ENCODE measurements at regions of chr11 and their contacts with region 1.

Region 1: GRCh38 chr11:61384271-61385242 is 7.8 kb upstream of the TMEM216 start:
- DNase-seq: no peak
- H3K4me3 ChIP-seq: no peak overlapping the region
- H3K27ac ChIP-seq: no peak overlapping the region
- H3K4me1 ChIP-seq: no peaks in the 10 kb centered on the region
- H3K27me3 ChIP-seq: no peaks in the 10 kb centered on the region
- CTCF ChIP-seq: no peak
- POLR2A ChIP-seq: no peak

Region 2: DNA sequence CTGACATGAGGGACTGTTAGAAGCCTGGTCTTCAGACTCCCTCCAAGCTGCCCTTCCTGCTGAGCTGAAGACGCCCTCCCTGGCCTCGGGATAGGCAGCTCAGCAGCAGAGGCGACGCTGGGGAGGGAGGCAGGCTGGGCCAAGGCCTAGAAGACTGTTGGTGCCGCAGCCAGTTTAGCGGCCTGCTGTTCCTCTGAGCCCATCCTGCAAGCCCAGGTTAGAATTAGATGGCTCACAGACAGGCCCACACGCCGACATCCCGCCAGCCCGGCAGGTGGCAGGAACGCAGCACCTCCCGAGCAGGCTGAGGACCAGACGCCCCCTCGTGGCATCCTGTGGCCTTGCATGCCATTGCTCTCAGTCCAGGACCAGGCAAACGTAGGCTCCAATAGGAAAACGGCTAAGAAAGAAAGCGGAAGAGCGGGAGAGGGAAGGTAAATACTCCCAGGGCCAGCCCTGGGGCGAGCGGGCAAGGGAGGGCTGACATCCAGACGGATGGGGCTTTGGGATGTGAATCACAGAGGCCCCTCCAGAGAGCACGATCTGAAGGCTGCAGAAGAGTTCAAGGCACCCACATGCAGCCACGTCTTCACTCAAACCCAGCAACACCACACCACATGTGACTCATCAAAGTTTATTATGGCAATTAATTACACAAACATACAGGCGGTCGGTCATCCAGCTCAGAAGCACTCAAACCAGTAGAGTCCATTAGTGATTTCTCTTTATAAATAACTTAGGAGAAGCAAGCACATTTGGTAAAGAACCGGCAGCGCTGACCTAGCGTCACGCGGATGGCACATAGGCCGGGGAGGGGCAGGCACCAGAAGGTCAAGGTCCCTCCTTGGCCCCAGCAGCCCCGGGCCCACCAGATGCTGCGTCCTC is 254.7 kb before region 1 on chr11:
- intact Hi-C with region 1: no loop called
- DNase-seq: peak; percentile 90
- H3K4me3 ChIP-seq: peak overlapping the region; percentile 8 to 23
- H3K27ac ChIP-seq: peak overlapping the region; percentile 85 to 90
- H3K4me1 ChIP-seq: peaks cover 0 to 6% of the 10 kb centered on the region in 2 donors
- H3K27me3 ChIP-seq: no peaks in the 10 kb centered on the region
- CTCF ChIP-seq: peak; percentile 99 to 100 (median 100)
- POLR2A ChIP-seq: peak in 1 of 2 donors; percentile 23

Region 3: DNA sequence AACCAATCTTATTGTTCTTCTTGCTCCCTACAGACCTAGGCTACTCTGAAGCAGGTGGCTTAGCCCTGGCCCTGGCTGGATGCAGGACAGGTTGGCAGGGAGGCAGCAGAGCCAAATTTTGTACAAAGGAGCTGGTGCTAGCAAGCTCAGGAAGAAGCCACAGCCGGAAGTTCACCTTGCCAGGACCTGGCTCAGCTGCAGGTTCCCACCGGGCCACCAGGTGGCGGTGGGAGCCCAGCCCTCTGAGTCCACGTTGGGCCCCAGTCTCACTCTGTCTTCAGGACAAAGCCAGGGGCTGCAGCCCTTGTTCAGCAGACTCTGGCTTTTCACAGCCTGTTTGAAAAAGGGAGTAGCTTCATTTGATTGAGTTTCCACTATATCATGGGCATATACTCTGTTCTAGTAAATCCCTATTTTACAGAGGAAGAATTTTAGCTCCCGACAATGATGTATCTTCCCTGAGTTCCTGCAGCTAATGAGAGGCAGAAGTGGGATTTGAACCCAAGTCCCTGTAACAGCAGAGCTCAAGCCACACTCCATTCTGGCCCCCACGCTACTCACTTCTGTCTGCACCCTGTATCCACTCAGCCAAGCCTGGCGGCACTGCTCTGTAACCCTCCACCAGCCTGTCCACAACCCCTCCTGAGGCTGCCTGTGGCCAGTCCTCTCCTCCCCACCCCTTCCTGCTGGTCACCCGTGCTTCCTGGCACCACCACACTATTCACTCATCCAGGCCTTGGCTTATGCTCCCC is 48.2 kb before region 1 on chr11:
- intact Hi-C with region 1: loop called (anchors 2 kb)
- DNase-seq: peak; percentile 76 to 85
- H3K4me3 ChIP-seq: no peak overlapping the region
- H3K27ac ChIP-seq: peak overlapping the region; percentile 55 to 93
- H3K4me1 ChIP-seq: peaks cover 0 to 18% of the 10 kb centered on the region in 2 donors
- H3K27me3 ChIP-seq: no peaks in the 10 kb centered on the region
- CTCF ChIP-seq: peak; percentile 94 to 98 (median 97)
- POLR2A ChIP-seq: no peak

Region 4: GRCh38 chr11:61446211-61446651 is 61.7 kb after region 1 on chr11:
- intact Hi-C with region 1: no loop called
- DNase-seq: peak; percentile 85 to 90
- H3K4me3 ChIP-seq: no peak overlapping the region
- H3K27ac ChIP-seq: peak overlapping the region; percentile 40 to 43
- H3K4me1 ChIP-seq: no peaks in the 10 kb centered on the region
- H3K27me3 ChIP-seq: no peaks in the 10 kb centered on the region
- CTCF ChIP-seq: peak; percentile 75 to 82 (median 80)
- POLR2A ChIP-seq: no peak

Region 5: GRCh38 chr11:61477727-61478148 is 93.2 kb after region 1 on chr11:
- intact Hi-C with region 1: no loop called
- DNase-seq: peak; percentile 47 to 60
- H3K4me3 ChIP-seq: no peak overlapping the region
- H3K27ac ChIP-seq: no peak overlapping the region
- H3K4me1 ChIP-seq: no peaks in the 10 kb centered on the region
- H3K27me3 ChIP-seq: no peaks in the 10 kb centered on the region
- CTCF ChIP-seq: peak; percentile 87 to 90 (median 88)
- POLR2A ChIP-seq: no peak

Region 6: DNA sequence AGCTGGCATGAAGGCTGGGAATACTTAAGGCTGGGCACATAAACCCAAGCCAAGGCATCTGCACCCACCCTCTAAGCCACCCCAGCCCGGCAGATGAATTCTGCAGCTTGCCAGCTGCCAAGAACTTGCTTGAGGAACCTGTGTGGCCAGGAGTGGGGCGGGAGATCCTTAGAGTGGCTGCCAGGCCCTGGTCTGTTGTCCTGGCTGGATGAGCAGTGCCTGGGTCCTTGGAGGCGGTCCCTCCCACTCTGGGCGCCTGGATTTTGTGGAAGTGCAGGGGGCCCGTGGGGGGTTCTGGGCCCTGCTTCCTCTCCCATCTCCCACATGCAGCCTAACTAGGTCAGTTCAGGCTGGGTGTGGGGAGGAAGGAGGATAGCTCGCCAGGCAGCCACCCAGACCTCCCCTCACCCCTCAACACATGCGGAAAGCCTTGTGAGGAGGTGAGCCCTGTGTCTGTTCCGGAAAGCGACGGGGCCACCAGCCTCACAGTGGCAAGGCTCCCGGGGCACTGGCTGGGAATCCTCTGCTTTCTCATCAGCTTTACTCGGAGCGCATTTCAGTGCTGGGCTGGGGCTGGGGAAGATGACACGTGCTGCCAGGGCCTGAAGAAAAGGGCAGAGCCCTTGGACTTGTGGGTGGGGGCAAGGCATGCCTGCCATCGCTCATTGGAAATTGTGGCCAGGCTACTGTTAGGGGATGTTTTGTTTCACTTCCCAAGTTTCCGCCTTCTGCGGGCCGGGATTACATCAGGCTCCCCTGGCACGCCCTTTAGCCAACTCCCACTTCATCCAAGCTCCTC is 304.0 kb after region 1 on chr11:
- intact Hi-C with region 1: no loop called
- DNase-seq: peak; percentile 65 to 73
- H3K4me3 ChIP-seq: no peak overlapping the region
- H3K27ac ChIP-seq: peak overlapping the region; percentile 72 to 76
- H3K4me1 ChIP-seq: peaks cover 0 to 4% of the 10 kb centered on the region in 2 donors
- H3K27me3 ChIP-seq: no peaks in the 10 kb centered on the region
- CTCF ChIP-seq: peak in 1 of 4 experiments; percentile 7
- POLR2A ChIP-seq: no peak

Measured in uterus (tissue), 4 donors.